ENCODE measurements at regions of chr1 and their contacts with region 1.

Region 1: DNA sequence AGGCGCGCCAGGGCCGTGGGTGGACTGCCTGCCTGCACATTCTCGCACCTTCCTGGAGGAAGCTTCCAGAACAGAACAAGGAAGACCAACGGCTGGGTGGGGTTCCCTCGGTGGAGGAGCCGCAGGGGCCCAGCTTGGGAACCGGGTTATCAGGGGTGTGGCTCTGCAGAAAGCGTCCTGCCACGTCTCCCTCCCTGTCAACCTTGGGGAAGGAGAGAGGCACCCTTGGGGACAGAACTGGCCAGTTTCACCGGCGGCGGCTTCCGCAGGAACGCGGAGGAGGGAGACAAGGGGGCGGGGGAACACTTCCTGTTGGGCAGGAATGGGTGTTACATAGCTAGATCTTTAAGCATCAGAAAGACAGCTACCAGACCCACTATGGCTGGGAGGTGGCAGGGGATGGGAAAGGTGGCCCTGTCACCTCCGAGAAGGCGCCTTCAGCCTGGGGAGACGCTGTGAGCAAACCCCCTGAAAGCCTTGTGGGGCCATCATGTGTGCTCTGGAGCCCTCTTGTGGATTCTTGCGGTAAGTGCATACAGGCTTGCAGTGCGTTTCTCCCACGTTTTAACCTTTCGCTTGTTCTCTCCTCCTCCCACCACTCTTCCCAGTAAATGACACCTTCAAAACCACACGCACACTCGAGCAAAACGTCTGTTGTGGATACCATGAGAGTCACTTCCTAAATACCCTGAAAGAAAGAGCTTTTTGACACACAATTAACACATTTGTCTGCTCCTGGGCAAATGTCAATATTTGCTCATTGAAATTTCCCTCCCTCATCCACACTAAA is 3.8 kb upstream of the PLEKHA6 start:
- DNase-seq: peak; percentile 81 to 90 (median 88)
- H3K4me3 ChIP-seq: peak overlapping the region; percentile 35 to 55 (median 42)
- H3K27ac ChIP-seq: peak overlapping the region; percentile 5 to 76
- H3K4me1 ChIP-seq: peaks cover 0 to 11% (median 8%) of the 10 kb centered on the region in 3 donors
- H3K27me3 ChIP-seq: no peaks in the 10 kb centered on the region
- CTCF ChIP-seq: peak; percentile 97

Region 2: GRCh38 chr1:204162231-204163074 is 201.1 kb before region 1 on chr1:
- intact Hi-C with region 1: loop called (anchors 10 kb)
- DNase-seq: peak; percentile 90 to 93 (median 91)
- H3K4me3 ChIP-seq: no peak overlapping the region
- H3K27ac ChIP-seq: no peak overlapping the region
- H3K4me1 ChIP-seq: no peaks in the 10 kb centered on the region
- H3K27me3 ChIP-seq: no peaks in the 10 kb centered on the region
- CTCF ChIP-seq: peak; percentile 98

Region 3: DNA sequence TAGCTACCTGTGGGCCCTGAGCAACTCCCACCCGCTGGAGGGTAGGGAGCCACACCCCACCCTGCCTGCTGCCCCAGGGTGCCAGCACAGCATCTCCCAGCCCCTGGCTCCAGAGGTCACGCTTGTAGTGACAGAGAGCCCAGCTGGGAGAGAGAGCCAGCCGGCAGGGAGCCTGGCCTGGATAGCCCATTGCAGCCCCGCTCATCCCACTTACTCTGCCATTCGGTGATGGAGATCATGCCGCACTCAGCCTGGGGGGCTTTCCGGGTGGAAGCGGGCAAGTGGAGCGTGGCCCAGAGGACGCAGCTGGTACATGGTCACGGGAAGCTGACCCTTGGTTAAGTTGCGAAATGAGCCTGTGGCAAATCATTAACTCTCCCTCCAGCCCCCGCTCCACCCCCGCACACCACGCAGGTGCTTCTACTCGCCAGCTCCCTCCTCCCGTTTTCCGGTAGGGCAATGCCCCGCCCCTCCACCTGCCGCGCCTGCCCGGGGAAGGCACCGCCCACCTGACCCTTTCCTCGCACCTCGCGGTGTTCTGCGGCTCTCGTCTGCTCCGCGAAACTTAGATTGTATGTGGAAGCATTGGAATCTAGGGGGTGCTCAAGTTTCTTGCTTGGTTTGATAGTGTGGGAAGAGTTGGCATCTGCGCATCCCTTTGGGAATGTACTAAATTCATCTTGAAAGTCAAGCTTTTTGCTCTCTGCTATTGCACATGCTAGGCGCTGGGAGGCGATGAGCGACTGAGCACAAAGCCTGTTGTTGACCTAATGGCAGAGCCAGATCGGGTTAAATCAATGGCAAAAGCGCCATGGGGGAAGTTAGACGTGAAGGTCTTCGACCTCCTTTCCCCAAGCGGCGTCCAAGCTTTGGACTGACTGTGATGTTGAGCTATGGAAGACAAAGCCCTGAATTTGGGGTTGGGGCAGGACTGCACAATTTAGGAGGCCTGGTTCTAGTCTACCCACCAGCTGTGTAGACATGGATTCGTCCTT is 149.6 kb before region 1 on chr1 and contains the start of gene GOLT1A:
- intact Hi-C with region 1: loop called (anchors 10 kb)
- DNase-seq: peak; percentile 94 to 96 (median 95)
- H3K4me3 ChIP-seq: peak within 1 kb of the TSS; percentile 30 to 40 (median 33)
- H3K27ac ChIP-seq: peak within 1 kb of the TSS; percentile 59
- H3K4me1 ChIP-seq: peaks cover 0 to 5% (median 0%) of the 10 kb centered on the region in 3 donors
- H3K27me3 ChIP-seq: no peaks in the 10 kb centered on the region
- CTCF ChIP-seq: peak; percentile 69
- total RNA-seq, gene GOLT1A: 8.9 TPM